GM10248 (cell line): ENCODE measurements at regions of chr1 and their contacts with region 1.

Region 1: GRCh38 chr1:232950197-232951176 is at the start of gene NTPCR:
- DNase-seq: peak; percentile 98
- CTCF ChIP-seq: no peak

Region 2: GRCh38 chr1:232968965-232969364 is 18.5 kb after region 1 on chr1:
- CTCF ChIA-PET with region 1: interaction called, 74 read pairs
- POLR2A ChIA-PET with region 1: interaction called, 3 read pairs
- DNase-seq: no peak
- CTCF ChIP-seq: no peak